Calu3 (cell line): ENCODE measurements at regions of chr11 and their contacts with region 1.

Region 1: DNA sequence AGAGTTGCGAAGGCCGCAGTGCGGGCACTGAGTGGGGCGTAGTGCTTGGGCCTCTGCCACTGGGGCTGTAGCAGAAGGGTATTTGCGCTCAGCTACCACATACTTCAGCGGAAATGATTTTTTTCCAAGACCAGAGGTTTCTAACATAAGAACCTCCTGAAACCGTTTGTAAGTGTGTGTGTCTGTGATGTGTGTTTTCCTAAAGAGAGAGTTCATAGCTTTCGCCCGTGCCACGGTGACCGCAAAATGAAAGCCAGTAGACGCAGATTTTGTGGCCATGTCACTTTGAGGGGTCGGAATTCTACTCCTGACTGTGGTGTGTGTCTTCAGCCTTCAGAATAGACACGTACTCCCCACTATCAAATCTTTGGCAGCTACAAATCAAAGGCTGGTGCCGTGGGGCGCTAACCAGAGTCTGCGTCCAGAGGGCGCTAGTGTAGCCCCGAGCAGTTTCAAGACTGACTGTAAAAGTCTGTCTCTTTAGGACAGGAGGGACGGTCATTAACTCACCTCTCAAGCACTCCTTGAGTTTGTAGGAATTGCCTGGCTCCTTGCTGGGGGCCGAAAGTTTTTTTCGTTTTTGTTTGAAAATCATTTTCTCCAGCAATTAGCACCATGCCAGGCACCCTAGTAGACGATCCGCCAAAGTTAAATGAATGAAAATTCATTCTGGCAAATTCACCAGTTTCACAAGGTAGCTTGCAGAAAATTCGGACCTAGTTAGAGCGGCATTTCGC is 2.5 kb upstream of the CALCA start:
- DNase-seq: peak; percentile 68
- H3K4me3 Mint-ChIP-seq: peak overlapping the region; percentile 50
- H3K27ac Mint-ChIP-seq: no peak overlapping the region
- H3K4me1 Mint-ChIP-seq: peaks cover 10% of the 10 kb centered on the region
- H3K27me3 Mint-ChIP-seq: peaks cover 95% of the 10 kb centered on the region
- CTCF ChIP-seq: peak; percentile 63

Region 2: DNA sequence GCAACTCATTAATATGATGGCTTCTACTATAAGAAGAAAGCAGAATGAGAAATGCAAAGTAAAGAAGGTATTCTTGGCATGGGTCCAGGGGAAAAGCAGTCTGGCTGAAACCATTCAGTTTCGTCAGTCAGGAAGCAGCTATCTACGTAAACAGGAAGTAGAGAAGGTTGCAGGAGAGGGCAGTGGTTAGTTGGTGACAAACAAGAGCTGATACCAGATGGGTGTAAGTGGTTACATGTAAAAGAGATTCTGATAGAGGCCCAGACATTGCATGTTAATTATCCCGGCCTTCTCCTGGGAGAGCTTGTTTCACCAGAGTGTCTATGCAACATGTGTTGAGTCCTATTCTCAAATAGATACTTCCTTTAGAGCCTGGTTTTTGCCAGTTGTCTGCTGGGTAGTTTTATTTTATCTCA is 396.1 kb before region 1 on chr11:
- CTCF ChIA-PET with region 1: no interaction called
- intact Hi-C with region 1: no loop called
- DNase-seq: peak; percentile 31
- H3K4me3 Mint-ChIP-seq: no peak overlapping the region
- H3K27ac Mint-ChIP-seq: peak overlapping the region; percentile 50
- H3K4me1 Mint-ChIP-seq: peaks cover 19% of the 10 kb centered on the region
- H3K27me3 Mint-ChIP-seq: no peaks in the 10 kb centered on the region
- CTCF ChIP-seq: no peak

Region 3: DNA sequence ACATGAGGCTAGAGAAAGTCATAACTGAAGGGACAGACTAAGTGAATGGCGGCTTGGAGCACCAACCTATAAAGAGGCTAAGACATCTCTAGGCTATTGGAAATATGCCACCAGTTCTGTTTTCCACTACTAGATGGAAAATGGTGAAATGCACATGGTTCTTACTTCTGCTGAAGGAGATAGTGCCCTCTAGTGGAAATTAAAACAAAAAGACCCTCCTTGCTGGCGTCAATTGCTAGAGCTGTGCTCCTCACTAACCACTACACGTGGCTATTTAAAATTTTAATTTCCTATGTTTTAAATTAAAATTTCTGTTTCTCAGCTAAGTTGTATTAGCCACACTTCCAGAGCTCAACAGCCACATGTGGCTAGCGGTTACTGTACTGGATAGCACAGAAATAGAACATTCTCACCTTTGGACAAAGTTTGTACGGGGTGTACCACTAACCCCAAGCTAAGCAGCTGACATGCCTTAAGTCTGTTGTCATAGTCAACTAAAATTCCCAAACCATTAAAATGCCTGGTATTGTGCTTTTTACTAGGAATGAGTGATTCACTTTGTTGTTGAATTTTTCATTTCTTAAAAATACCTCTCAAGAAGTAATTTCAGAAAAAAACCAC is 31.6 kb after region 1 on chr11:
- CTCF ChIA-PET with region 1: interaction called, 5 read pairs
- intact Hi-C with region 1: loop called (anchors 5 kb)
- DNase-seq: peak; percentile 4
- H3K4me3 Mint-ChIP-seq: no peak overlapping the region
- H3K27ac Mint-ChIP-seq: no peak overlapping the region
- H3K4me1 Mint-ChIP-seq: no peaks in the 10 kb centered on the region
- H3K27me3 Mint-ChIP-seq: peaks cover 27% of the 10 kb centered on the region
- CTCF ChIP-seq: peak; percentile 37

Region 4: DNA sequence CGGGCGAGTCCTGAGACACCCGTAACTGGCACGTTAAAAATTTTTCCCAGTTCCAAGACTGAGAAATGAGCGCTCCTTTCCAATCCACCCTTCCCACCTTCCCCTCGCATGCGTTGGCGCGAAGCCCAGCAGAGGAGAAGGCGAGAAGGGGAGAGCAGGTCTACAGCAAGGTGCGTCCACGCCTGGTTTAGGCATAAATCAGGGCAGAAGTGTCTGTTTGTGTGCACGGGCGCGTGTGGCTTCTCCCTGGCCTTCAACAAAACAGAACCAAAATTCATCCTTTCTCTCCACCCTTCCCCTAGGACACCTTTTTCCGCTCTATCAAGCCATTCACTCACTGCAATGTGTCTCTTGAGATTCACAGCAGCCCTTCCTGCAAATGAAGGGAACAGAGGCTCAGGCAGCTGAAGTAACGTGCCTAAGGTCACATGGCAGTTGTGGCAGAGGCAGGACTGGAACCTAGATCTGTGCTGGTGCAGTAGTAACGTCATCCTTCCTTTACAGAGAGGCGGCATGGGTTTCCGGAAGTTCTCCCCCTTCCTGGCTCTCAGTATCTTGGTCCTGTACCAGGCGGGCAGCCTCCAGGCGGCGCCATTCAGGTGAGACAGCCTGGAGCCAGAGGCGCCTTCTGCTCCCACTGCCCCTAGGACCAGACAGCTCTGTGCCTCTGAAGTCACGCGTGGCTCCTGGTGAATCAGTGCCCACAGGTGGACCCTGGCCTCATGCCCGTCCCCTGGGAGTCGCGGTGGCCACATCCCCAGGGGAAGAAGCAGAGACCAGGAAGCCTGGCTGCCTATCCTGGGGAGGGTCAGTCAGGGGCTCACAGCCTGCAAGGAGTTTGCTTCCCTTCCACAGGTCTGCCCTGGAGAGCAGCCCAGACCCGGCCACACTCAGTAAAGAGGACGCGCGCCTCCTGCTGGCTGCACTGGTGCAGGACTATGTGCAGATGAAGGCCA is 99.8 kb after region 1 on chr11:
- CTCF ChIA-PET with region 1: interaction called, 23 read pairs
- intact Hi-C with region 1: loop called (anchors 2 kb)
- DNase-seq: peak; percentile 94
- H3K4me3 Mint-ChIP-seq: peak overlapping the region; percentile 78
- H3K27ac Mint-ChIP-seq: no peak overlapping the region
- H3K4me1 Mint-ChIP-seq: peaks cover 17% of the 10 kb centered on the region
- H3K27me3 Mint-ChIP-seq: peaks cover 70% of the 10 kb centered on the region
- CTCF ChIP-seq: peak; percentile 90

Region 5: DNA sequence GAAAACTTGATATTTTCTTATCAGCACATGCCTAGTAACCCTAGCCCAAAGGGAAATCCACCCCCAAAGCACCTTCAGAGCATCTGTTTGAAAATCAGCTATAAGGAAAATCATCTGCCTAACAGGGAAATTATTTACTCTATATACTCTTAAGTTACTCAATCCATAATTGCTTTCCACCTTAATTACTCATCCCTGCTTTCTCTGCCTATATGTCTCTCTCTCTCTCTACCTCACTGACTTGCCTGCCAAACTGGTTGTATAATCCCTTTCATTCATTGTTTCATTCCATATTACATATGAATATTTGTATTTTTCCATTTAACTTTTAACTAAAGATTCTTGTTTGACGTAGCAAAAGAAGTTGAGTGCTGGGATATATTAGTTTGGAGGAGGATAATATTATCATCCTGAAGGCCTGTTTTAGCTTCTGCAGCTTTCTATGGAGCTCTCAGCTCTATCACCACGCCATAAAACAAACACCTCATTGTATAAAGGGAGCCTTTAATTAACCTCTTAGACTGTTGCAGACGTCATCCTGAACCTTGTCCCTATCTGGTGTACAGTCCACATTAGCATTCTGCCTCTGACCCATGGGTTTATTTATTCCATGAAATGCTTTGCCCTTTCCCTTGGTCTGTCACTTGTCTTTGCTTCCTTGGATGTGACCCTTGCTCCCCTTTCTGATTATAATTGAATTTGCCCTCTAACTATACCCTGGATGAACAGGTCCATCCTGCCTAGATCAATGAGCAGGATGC is 239.0 kb after region 1 on chr11:
- CTCF ChIA-PET with region 1: no interaction called
- intact Hi-C with region 1: loop called (anchors 5 kb)
- DNase-seq: no peak
- H3K4me3 Mint-ChIP-seq: no peak overlapping the region
- H3K27ac Mint-ChIP-seq: no peak overlapping the region
- H3K4me1 Mint-ChIP-seq: peaks cover 8% of the 10 kb centered on the region
- H3K27me3 Mint-ChIP-seq: peaks cover 24% of the 10 kb centered on the region
- CTCF ChIP-seq: no peak